ENCODE measurements at regions of chr15 and their contacts with region 1.

Region 1: GRCh38 chr15:31483053-31483985 is 156.7 kb downstream of the KLF13 start:
- DNase-seq: peak; percentile 73
- ATAC-seq: peak; percentile 68
- H3K4me3 Mint-ChIP-seq: peak overlapping the region; percentile 93
- H3K27ac Mint-ChIP-seq: peak overlapping the region; percentile 94
- H3K4me1 Mint-ChIP-seq: peaks cover 67% of the 10 kb centered on the region
- H3K27me3 Mint-ChIP-seq: no peaks in the 10 kb centered on the region

Region 2: DNA sequence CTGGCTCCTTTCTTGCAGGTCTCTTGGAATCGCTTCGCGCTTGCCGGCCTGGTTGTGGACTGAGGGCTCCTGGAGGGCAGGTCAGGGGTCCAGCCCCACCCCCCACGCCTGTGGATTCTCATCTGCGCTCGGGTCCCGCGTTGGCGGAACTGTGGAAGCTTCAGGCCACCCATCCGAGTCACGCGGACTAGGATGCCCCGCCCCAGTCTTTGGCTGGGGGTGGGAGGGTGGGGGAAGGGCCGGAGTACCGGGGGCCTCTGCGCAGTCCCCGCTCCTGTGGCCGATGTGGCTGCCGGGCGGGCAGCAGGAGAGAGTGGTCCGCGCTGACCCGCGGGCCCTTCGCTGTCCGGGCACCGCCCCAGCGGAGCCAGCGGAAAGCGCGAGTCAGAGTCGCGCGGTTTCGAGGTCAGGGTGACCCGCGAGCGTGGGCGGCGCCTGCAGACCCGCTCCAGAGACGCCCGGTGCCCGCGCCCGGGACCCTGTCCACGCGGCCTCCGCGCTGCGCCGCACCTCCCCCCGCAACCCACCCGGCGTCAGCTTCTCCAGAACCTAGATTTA is 42.5 kb before region 1 on chr15:
- CTCF ChIA-PET with region 1: interaction called, 234 read pairs
- POLR2A ChIA-PET with region 1: interaction called, 7 read pairs
- DNase-seq: peak; percentile 56
- ATAC-seq: peak; percentile 60
- H3K4me3 Mint-ChIP-seq: peak overlapping the region; percentile 72
- H3K27ac Mint-ChIP-seq: peak overlapping the region; percentile 81
- H3K4me1 Mint-ChIP-seq: peaks cover 70% of the 10 kb centered on the region
- H3K27me3 Mint-ChIP-seq: no peaks in the 10 kb centered on the region

Region 3: GRCh38 chr15:31472636-31473384 is 10.5 kb before region 1 on chr15:
- CTCF ChIA-PET with region 1: interaction called, 95 read pairs
- POLR2A ChIA-PET with region 1: interaction called, 14 read pairs
- DNase-seq: peak; percentile 77
- ATAC-seq: peak; percentile 96
- H3K4me3 Mint-ChIP-seq: peak overlapping the region; percentile 62
- H3K27ac Mint-ChIP-seq: peak overlapping the region; percentile 89
- H3K4me1 Mint-ChIP-seq: peaks cover 38% of the 10 kb centered on the region
- H3K27me3 Mint-ChIP-seq: no peaks in the 10 kb centered on the region